Activated T-helper 1 cell treated with anti-CD3 and anti-CD28 coated beads, Interleukin-12 subunit alpha, Interleukin-12 subunit beta, Interleukin-2, Interleukin-4 antibody, amounts not matched to agents 30 ng/mL and 10 ng/mL and 1 ng/mL, durations not matched to agents 14 hours and 24 hours and 36 hours (primary cell): ENCODE measurements at regions of chrX and their contacts with region 1.

Region 1: DNA sequence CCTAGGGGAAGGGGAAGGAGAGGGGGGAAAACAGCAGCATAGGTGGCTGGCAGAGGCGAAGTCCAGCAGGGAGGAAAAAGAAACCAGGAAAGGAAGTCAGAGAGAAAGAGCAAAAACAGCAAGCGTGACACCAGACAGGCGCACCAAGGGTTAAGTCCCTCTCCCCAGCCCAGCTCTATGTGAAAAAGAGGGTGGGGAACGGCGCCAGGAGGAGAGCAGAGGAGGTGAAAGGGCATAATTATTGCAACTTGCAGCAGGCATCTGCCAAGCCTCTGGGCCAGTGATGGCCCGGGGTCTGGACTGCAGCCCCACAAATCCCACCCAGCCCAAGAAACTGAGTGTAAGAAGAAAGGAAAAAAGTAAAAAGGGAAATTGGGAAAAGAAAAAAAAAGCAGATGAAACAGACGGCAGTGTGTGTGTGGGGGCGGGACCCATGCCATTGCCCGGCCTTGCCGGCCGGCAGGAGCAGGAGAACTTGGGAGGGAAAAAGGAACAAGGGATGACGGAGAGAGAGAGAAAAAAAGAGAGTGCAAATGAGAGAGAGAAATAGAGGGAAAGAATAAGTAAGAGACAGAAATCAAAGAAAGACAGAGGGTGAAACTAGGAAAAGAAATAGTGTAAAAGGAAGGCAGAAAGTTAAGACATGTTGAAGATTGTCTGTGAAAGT is 14.1 kb upstream of the RHOXF2 start:
- DNase-seq: no peak
- H3K4me3 Mint-ChIP-seq: peak overlapping the region; percentile 68
- H3K27ac Mint-ChIP-seq: peak overlapping the region; percentile 74
- H3K4me1 Mint-ChIP-seq: peaks cover 40% of the 10 kb centered on the region
- H3K27me3 Mint-ChIP-seq: peaks cover 3% of the 10 kb centered on the region

Region 2: DNA sequence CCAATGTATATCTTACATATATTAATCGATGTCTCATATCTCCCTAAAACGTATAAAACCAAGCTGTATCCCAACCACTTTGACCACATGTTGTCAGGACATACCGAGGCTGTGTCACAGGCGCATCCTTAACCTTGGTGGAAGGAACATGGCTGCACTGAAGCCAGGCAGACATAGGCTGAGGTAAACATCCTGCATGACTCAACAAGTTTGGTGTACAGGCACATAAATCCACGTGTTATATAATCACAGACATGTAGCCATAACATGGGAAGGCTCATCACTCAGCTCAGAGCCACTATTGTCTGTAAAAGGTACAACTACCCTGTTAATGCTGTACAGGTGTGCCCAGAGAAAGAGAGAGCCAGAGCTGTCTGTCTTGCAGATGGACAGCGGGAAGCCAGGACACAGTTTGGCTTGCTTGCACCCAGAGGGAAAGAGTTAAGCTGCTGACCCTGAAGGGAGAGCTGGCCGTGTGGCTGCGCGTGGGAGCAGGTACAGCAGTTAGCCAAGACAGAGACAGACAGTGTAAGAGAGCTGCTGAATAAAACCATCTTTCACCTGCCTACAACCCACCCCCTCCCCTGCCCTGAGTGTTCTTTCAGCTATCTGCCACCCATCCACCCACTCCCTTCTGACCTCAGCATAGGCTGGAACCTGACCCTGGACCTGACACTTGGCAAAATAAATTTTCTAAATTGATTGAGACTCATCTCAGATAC is 84.0 kb after region 1 on chrX:
- intact Hi-C with region 1: loop called (anchors 10 kb)
- DNase-seq: no peak
- H3K4me3 Mint-ChIP-seq: no peak overlapping the region
- H3K27ac Mint-ChIP-seq: no peak overlapping the region
- H3K4me1 Mint-ChIP-seq: peaks cover 6% of the 10 kb centered on the region
- H3K27me3 Mint-ChIP-seq: no peaks in the 10 kb centered on the region